Activated CD8-positive, alpha-beta memory T cell treated with anti-CD3 and anti-CD28 coated beads, Interleukin-2, amount 10 ng/mL, durations not matched to agents 7 days and 5 days (primary cell): ENCODE measurements at regions of chr2 and their contacts with region 1.

Region 1: DNA sequence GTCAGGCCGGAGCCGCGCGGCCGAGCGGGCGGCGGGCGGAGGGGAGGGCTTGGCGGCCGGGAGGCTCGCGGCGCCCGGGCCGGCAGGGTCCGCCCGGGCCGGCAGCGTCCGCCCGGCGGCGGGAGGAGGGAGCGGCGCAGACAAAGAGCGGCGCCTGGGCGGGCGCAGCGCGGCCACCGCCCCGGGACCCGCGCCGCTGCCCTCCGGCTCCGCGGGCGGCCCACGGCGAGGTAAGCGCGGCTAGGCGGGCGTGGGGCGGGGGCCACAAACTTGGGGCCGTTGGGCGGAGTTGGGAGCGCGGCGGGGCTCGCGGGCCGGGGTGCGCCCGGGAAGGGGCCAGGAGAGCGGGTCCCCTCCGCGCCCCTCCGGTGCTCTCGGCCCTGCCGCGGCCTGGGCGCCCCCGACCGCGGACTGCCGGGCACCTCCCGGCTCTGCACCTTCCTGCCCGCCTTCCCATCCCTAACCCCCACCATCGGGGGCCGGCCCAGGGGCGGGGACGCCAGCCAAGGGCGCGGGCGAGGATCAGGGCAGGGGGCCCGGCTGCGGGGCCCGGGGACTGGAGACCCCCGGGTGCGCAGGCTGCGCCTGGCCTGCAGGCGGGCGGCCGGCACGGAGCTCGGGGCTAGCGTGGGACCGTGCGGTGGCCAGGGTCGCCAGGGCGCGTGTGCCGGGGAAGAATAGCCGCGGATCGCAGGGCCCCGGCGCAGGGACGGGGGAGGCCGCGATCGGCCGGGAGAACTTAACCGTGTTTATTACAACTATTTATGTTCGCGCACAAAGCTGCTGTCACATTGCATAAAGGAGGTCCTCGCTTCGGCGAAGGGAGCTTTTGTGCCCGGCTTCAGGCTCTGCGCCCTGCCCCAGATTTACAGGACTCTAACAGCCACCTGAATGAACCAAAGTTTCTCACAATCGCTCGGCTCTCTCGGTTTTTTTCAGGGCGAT is at the start of gene NCK2:
- DNase-seq: no peak
- ATAC-seq: peak; percentile 12
- H3K4me3 Mint-ChIP-seq: peak within 1 kb of the TSS; percentile 92
- H3K27ac Mint-ChIP-seq: peak within 1 kb of the TSS; percentile 97
- H3K4me1 Mint-ChIP-seq: peaks cover 59% of the 10 kb centered on the region
- H3K27me3 Mint-ChIP-seq: no peaks in the 10 kb centered on the region
- total RNA-seq, gene NCK2: 51.6 to 54.1 TPM

Region 2: DNA sequence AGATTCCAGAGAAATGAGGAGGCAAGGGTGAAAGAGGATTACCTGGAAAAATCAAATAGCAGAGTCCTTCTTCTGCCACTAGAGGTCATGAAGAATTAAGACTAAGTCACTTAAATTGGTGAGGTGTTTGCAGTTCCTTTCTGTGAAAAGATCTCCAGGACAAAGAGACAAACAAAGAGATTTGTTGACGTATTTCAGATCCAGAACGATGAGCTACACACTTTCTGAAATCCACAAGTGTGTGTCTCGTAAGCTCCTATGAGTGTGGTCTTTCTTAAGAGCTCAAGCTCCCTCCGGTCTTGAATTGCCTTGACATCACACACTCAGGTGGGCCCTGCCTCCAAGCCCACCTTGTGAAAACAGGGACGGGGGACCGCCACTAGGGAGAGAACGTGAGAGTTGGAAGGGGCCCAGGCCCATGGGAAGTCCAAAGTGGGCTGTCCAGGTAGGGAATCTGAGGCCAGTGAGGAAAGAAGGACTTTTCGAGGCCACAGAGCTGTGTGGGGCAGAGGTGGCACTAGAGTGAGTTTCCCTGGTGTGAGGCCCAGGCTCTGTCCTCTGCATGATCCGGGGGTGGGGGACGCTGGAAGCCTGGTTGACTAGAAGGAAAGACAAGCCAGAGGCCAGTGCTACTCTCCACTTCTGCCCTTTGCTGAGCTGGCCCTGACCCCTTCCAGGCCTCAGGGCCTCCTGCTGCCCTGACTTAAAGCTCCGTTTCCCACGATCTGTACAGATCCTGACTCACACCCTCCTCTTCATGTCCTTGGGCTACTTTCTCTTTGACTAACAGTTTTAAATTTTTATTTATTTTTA is 168.5 kb before region 1 on chr2:
- CTCF ChIA-PET with region 1: interaction called, 11 read pairs
- DNase-seq: no peak
- ATAC-seq: no peak
- H3K4me3 Mint-ChIP-seq: no peak overlapping the region
- H3K27ac Mint-ChIP-seq: peak overlapping the region; percentile 37
- H3K4me1 Mint-ChIP-seq: peaks cover 25% of the 10 kb centered on the region
- H3K27me3 Mint-ChIP-seq: no peaks in the 10 kb centered on the region

Region 3: DNA sequence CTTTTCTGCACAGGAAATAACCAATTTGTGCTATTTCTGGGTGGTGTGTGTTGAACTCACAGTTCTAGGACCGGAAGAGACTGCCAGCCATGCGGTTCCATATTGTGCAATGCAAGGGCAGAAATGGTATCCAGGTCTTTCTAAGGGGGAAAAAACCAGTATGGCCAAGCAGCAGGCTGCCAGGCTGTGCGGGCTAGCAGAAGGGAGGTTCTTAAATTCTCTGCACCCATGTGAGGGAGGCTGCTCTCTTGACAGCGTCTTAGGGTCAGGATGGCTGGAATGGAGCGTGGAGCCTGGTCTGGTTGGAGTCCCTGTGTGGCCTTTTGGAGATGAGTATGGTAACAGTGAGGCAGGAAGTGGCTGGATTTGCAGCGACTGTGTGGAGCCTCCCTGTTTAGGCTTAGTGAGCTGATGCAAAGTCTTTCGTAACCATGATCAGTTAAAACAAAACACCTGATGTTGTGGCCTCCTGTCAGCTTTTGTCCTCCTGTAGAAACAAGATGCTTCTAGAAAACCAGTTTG is 52.2 kb after region 1 on chr2:
- CTCF ChIA-PET with region 1: interaction called, 14 read pairs
- DNase-seq: peak; percentile 85
- ATAC-seq: peak; percentile 55
- H3K4me3 Mint-ChIP-seq: peak overlapping the region; percentile 65
- H3K27ac Mint-ChIP-seq: peak overlapping the region; percentile 98
- H3K4me1 Mint-ChIP-seq: peaks cover 92% of the 10 kb centered on the region
- H3K27me3 Mint-ChIP-seq: no peaks in the 10 kb centered on the region

Region 4: GRCh38 chr2:105888625-105889400 is 143.6 kb after region 1 on chr2:
- CTCF ChIA-PET with region 1: no interaction called
- DNase-seq: no peak
- ATAC-seq: peak; percentile 20
- H3K4me3 Mint-ChIP-seq: no peak overlapping the region
- H3K27ac Mint-ChIP-seq: no peak overlapping the region
- H3K4me1 Mint-ChIP-seq: peaks cover 23% of the 10 kb centered on the region
- H3K27me3 Mint-ChIP-seq: no peaks in the 10 kb centered on the region

Region 5: DNA sequence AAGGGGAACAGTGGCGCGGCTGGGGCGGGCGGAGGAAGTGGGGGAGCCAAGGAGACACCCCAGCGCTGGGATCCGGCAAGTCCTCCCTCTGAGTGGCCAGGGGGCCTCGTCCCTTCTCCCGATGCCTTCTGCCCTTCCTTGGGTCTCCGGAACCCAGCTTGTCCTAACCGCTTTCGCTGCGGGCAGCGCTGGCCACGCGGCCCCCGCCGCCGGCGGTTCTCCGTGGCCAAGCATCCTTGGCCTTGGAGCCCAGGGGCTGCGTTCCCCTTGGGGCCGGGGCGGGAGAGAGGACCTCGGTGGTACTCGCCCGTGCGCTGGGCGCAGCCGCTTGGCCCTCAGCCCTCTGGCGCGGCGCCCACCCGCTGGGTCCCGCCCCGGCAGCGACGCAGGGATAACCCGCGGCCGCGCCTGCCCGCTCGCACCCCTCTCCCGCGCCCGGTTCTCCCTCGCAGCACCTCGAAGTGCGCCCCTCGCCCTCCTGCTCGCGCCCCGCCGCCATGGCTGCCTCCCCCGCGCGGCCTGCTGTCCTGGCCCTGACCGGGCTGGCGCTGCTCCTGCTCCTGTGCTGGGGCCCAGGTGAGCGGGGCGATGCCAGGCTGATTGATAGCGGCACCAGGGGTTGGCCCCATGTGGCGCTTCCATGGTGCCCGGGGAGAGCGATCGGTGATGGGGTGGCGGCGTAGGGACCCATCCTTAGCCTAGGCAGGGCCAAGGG is 320.2 kb after region 1 on chr2:
- CTCF ChIA-PET with region 1: no interaction called
- DNase-seq: no peak
- ATAC-seq: peak; percentile 61
- H3K4me3 Mint-ChIP-seq: no peak overlapping the region
- H3K27ac Mint-ChIP-seq: no peak overlapping the region
- H3K4me1 Mint-ChIP-seq: peaks cover 9% of the 10 kb centered on the region
- H3K27me3 Mint-ChIP-seq: peaks cover 31% of the 10 kb centered on the region